WTC11 (cell line): ENCODE measurements at regions of chr11 and their contacts with region 1.

Region 1: GRCh38 chr11:7665473-7666291 is 7.6 kb downstream of the CYB5R2 start:
- DNase-seq: peak; percentile 89
- ATAC-seq: peak; percentile 99
- H3K4me3 Mint-ChIP-seq: no peak overlapping the region
- H3K27ac Mint-ChIP-seq: no peak overlapping the region
- H3K4me1 Mint-ChIP-seq: peaks cover 9% of the 10 kb centered on the region; the same call in 1 of the 2 replicates
- H3K27me3 Mint-ChIP-seq: peaks cover 8% of the 10 kb centered on the region; the same call in 1 of the 2 replicates
- CTCF ChIP-seq: peak; percentile 94

Region 2: DNA sequence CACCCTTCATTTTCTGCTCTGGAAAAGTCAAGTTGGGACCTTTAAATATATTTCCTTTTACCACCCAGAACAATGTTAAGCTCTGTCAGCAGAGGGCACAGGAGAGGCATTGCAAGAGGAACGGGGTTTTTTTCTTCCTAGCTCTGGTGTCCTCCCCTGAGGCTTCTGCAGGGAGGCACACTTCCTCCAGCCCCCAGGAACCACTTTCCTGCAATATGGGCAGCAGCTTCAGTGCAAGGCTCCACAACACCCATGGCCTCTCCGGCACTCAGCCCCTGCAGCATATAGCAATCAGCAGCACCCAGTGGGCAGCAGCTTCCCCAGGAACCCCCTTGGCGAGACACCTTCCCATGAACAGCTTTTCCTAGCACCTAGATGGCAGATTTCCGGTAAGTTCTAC is 312.6 kb before region 1 on chr11:
- CTCF ChIA-PET with region 1: interaction called, 12 read pairs
- POLR2A ChIA-PET with region 1: no interaction called
- DNase-seq: peak; percentile 41
- ATAC-seq: peak; percentile 96
- H3K4me3 Mint-ChIP-seq: no peak overlapping the region
- H3K27ac Mint-ChIP-seq: no peak overlapping the region
- H3K4me1 Mint-ChIP-seq: peaks cover 14% of the 10 kb centered on the region; the same call in 1 of the 2 replicates
- H3K27me3 Mint-ChIP-seq: no peaks in the 10 kb centered on the region; the same call in 1 of the 2 replicates
- CTCF ChIP-seq: 0 out of 2 replicates have a peak, but pooled peaks have one; percentile 37

Region 3: DNA sequence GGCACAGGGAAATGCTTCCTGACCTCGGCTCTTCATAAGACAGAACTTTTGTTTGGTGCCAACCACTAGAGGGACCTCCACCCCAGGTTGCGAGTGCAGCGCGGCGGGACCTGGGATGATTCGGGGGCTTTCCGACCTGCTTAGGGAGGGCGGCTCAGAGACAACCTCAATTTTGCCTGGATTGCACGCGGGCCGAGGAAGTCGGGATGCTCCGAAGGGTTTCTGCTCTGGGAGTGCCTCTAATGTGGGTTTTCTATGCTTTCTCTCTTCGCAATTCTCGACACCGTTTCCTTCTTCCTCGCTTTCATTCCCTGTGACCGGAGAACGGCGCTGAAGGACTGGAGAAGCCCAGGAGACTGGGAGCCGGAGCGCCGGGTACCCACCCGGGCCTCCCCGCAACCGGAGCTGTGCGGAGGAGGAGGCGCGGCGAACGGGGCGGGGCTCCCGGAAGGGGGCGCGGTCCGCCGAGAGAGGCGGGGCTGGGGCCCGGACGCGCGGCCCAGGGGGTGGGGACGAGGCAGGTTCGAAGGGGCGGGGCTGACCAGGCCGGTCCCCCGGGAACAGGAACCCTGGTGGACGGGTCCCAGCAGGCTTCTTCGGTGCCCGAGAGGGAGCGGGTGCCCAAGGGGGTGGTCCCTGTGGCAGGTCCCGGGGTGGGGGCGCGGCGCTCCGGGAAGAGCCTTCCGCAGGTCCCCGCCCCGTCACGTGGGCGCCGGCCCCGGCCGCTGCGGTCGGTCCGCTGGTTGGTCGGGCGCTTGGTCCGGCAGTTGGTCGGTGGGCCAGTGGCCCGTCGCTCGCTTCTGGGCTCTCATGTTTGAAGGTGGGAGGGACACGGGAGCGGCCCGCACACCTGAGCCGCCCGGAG is 152.2 kb before region 1 on chr11 and contains the start of gene PPFIBP2:
- CTCF ChIA-PET with region 1: interaction called, 15 read pairs
- POLR2A ChIA-PET with region 1: no interaction called
- DNase-seq: peak; percentile 83
- ATAC-seq: peak; percentile 83
- H3K4me3 Mint-ChIP-seq: peak within 1 kb of the TSS; percentile 83
- H3K27ac Mint-ChIP-seq: peak within 1 kb of the TSS; percentile 63
- H3K4me1 Mint-ChIP-seq: peaks cover 41% of the 10 kb centered on the region
- H3K27me3 Mint-ChIP-seq: peaks cover 24% of the 10 kb centered on the region
- CTCF ChIP-seq: no peak
- total RNA-seq, gene PPFIBP2: 12.5 to 21.4 TPM (median 12.9 TPM) in 3 replicates

Region 4: DNA sequence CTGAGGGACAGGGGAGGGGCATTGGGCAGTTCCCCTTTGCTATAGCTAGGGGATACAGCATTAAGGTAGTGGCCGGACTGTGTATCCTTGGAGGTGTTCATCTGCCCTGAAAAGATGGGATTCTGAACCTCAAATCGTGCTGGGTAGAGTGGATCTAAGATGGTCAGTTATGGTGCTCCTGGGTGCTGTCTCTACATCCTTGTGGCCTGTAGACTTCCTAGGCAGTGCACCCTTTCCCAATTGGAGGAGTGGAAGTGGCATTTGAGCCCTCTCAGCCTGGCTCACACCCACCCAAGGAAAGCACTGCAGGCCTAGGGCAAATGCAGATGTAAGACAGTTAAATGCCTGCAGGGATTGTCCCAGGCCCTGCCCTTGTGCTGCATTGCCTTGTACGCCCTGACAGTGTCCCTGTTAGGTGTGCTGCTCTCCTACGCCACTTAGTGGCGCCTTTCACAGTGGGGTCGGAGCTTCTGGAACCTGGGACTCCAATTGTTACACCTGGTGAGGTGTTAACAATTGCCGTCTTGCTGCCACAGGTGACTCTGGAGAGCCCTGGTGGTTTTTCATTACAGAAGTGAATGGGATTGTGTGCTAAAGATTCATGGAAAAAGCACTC is 116.9 kb before region 1 on chr11:
- CTCF ChIA-PET with region 1: interaction called, 13 read pairs
- POLR2A ChIA-PET with region 1: no interaction called
- DNase-seq: peak; percentile 84
- ATAC-seq: peak; percentile 98
- H3K4me3 Mint-ChIP-seq: no peak overlapping the region
- H3K27ac Mint-ChIP-seq: 0 out of 2 replicates have a peak overlapping the region, but pooled peaks have one; percentile 14
- H3K4me1 Mint-ChIP-seq: peaks cover 37% of the 10 kb centered on the region
- H3K27me3 Mint-ChIP-seq: no peaks in the 10 kb centered on the region
- CTCF ChIP-seq: peak; percentile 45; the same call in 1 of the 2 replicates